GM10248 (cell line): ENCODE measurements at regions of chr7 and their contacts with region 1.

Region 1: DNA sequence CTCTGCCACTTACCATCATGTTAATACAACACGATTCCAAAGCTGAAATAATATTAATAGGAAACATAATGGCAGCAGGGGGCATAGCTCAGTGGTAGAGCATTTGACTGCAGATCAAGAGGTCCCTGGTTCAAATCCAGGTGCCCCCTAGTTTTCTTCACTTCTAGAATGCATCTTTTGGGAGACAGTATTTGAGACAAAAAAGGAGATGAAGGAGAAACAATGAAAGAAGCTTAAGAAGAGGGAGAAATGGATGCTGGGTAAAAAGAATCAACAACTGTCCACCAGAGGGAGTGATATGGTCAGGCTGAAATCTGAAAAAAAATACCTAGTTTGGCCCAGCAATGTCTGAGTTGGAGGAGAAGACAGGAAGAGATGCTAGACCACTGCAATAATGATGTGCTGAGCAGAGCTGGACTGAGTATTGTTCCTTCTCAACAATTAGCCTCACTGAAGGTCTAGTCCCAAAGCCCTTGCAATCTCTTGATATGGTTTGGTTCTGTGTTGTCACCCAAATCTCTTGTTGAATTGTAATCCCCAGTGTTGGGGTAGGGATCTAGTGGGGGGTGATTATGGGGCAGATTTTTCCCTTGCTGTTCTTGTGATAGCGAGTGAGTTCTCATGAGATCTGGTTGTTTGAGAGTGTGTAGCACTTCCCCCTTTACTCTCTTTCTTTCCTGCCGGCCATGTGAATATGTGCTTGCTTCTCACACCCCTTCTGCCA is 48.3 kb downstream of the ZNF783 start:
- DNase-seq: peak; percentile 51
- CTCF ChIP-seq: peak; percentile 31

Region 2: DNA sequence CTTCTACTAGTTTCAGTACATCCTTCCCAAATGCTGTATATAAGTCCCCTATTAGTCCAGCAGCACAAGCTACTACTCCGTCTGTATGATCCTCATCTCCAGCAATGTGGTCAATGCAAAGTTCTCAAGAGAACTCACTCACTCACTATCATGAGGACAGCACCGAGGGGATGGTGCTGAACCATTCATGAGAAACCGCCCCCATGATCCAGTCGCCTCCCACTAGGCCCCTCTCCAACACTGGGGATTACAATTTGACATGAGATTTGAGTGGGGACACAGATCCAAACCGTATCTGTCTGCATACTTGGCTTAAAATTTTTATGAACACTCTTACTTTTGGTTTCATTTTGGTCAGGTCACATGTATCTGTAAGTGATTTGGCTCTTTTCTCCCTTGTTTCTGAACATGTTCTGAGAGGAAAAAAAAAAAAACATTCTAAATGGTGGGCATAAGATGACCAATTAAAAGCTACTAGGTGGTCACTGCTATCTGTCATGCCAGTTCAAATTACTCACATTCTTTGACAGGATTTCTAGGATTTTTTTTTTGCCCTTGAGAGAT is 11.8 kb after region 1 on chr7:
- CTCF ChIA-PET with region 1: interaction called, 17 read pairs
- POLR2A ChIA-PET with region 1: no interaction called
- DNase-seq: peak; percentile 33
- CTCF ChIP-seq: no peak

Region 3: GRCh38 chr7:149355390-149356048 is 45.2 kb after region 1 on chr7:
- CTCF ChIA-PET with region 1: no interaction called
- POLR2A ChIA-PET with region 1: no interaction called
- DNase-seq: no peak
- CTCF ChIP-seq: no peak

Region 4: DNA sequence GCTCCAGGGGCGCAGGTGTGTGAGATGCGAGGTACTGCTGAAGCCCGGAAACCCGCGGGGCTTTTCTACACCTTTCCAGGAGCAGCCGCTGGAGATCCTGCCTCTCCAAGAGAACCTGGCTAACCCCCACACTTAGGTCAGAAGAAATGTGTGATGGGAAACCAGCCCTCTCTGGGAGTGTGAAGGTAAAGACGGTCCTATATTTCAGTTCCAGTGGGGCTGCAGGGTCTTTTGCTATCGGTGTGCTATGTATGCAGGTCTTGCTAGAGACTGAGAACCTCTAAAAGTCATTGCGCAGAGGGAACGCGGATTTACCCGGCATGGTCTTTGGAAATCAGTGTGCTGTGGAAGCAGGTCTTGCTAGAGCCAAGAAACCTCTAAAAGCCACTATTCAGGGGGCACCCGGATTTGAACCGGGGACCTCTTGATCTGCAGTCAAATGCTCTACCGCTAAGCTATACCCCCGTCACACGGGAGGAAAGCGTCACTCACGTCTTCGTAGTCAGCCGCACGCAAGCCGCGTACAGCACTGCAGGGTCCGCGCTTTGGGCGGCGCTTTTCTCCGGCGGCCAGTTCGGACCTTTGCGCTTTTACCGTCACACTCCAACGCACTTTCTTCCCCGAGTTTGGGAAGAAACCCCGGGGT is 104.6 kb after region 1 on chr7:
- CTCF ChIA-PET with region 1: no interaction called
- POLR2A ChIA-PET with region 1: no interaction called
- DNase-seq: no peak
- CTCF ChIP-seq: no peak